ENCODE measurements at regions of chr5 and their contacts with region 1.

Region 1: DNA sequence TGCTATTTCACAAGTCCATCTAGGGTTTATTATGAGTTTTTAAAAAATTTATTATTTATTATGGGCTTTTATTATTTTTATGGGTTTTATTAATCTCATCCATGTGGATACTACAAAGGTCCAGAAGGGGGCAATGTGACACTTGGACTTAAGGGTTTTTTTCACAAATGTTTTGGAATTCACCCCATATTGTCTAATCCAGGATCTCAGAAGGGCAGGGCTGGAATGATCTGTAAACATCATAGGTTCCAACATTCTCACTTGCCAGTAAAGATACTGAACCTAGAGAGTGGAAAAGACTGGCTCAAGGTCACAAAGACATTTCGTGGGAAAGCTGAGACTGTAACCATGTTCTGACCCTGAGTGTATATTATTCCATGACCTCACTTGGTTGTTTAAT is 35.6 kb downstream of the NIM1K start:
- DNase-seq: no peak
- ATAC-seq: peak in 1 of 2 donors; percentile 50
- H3K4me3 ChIP-seq: no peak overlapping the region
- H3K27ac ChIP-seq: no peak overlapping the region
- H3K4me1 ChIP-seq: no peaks in the 10 kb centered on the region
- H3K27me3 ChIP-seq: no peaks in the 10 kb centered on the region

Region 2: DNA sequence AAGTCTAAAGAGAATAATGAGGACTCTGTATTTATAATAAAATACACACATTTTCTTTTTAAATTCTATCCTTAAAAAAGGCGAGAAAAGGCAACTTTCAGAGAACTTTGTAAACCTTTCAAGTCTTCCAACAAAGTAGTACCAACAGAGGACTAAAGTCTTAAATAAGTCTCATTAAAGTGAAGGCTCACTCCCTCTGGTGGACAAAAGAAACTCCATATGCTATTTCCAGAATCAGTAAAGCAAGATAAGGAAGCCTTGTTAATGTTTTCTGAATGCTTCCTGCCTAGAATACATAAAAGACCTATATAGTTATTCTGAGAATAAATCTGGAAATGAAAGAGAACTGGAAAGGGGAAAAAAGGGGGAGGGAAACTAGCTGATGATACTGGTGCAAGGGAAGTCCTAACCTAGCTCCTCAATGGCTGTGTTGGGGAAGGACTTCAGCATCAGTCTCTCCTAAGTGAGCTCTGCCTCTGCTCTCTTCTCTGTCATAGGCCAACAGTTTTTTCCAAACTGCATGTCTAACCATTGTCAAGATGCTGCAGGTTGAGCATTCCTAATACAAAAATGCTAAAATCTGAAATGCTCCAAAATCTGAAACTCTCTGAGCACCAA is 78.4 kb after region 1 on chr5:
- intact Hi-C with region 1: loop called in 1 of 4 experiments (anchors 5 kb)
- DNase-seq: no peak
- ATAC-seq: peak; percentile 55 to 65
- H3K4me3 ChIP-seq: no peak overlapping the region
- H3K27ac ChIP-seq: no peak overlapping the region
- H3K4me1 ChIP-seq: peaks cover 8% of the 10 kb centered on the region
- H3K27me3 ChIP-seq: no peaks in the 10 kb centered on the region

Region 3: GRCh38 chr5:43389679-43390329 is 162.1 kb after region 1 on chr5:
- intact Hi-C with region 1: loop called in 2 of 4 experiments (anchors 10 kb)
- DNase-seq: peak in 2 of 3 donors; percentile 53 to 56
- ATAC-seq: peak; percentile 91 to 93
- H3K4me3 ChIP-seq: no peak overlapping the region
- H3K27ac ChIP-seq: no peak overlapping the region
- H3K4me1 ChIP-seq: no peaks in the 10 kb centered on the region
- H3K27me3 ChIP-seq: no peaks in the 10 kb centered on the region

Measured in right cardiac atrium (tissue), 5 donors.